ENCODE measurements at regions of chr6 and their contacts with region 1.

Region 1: DNA sequence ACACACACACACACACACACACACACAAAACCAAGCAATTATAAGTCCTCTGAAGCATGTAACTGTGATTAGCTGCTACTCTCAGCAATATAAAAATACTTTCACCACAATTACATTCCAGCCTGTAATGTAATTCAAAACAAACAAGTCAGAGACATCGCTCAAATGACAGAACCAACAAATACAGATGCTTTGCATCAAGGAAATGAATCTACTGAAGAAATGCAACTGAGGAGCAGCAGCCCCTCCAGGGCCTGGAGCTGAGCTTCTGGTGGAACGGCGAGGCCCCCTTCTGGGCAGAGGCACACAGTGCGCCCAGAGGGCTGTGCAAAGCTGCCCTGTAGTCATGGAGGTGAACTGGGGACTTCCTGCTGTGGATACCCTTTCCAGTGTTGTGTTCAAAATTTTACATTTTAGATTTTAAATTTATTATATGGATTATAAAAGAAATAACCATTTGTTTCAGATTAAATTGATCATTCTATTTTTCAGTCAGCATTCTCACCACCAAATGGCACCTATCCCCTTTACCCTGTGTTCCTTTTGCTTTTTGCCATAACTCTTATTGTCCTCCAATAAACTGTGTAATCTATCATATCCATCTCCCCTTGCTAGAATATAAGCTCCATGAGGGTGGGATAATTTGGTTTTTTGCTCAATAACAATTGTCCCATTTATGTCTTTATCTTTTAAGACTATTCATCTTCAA is 23.2 kb downstream of the ADAT2 start:
- DNase-seq: peak; percentile 60
- H3K4me3 ChIP-seq: no peak overlapping the region
- H3K27ac ChIP-seq: no peak overlapping the region
- H3K4me1 ChIP-seq: no peaks in the 10 kb centered on the region
- H3K27me3 ChIP-seq: no peaks in the 10 kb centered on the region
- CTCF ChIP-seq: peak; percentile 88

Region 2: DNA sequence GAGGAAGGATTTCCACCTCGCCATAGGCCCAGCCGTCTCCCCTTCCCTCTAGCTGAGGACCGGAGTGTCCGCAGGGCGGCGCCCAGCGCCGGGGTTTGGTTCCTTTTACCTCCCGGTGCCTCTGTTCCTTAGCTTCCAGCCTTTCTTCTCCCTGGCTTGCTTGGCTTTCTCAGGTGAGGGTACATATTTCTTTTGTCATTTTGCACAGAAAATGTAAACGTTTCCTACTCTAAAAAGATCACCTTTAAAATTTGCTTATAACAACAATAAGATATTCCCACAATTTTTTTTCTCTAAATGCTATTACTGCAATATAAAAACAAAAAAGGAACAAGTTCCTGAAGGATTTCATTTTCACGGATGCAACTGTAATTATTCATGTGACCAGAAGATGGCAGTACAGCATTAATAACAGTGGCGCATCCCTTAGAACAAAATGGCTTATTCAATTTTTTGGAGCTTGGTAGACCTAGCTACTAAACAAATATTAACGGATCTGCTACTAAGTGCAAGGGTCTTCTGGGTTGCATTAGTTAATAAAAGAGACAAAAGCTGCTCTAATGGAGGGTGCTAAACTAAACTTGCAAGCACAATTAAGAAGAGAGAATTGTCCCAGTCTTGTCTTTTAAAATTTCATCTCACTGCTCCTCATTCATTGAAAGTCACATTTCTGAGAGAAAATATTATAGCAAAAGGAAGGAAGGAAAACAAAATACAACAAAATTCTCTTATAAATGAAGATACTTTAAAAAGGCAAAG is 952.6 kb before region 1 on chr6:
- intact Hi-C with region 1: loop called (anchors 5 kb)
- DNase-seq: peak; percentile 19
- H3K4me3 ChIP-seq: no peak overlapping the region
- H3K27ac ChIP-seq: no peak overlapping the region
- H3K4me1 ChIP-seq: no peaks in the 10 kb centered on the region
- H3K27me3 ChIP-seq: no peaks in the 10 kb centered on the region
- CTCF ChIP-seq: peak; percentile 76

Region 3: DNA sequence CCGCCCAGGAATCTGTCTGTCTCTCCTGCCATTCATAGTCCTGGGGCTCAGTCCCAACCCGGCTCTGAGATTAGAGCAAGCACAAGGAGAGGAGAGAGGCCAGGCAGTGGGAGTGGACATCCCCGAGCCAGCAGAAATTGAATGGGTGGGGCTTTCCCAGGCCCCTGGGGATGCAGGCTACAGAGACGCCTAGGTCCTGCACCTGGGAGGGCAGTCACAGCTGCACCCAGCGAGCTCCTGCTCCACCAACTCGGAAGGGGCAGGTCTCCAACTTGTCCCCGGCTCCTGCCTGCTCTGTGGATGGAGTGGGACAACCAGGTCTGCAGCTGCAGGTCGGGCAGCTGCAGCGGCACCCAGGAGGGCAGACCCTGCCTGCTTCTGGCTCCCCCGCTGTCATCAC is 377.7 kb before region 1 on chr6:
- intact Hi-C with region 1: no loop called
- DNase-seq: no peak
- H3K4me3 ChIP-seq: no peak overlapping the region
- H3K27ac ChIP-seq: no peak overlapping the region
- H3K4me1 ChIP-seq: no peaks in the 10 kb centered on the region
- H3K27me3 ChIP-seq: no peaks in the 10 kb centered on the region
- CTCF ChIP-seq: no peak

Region 4: DNA sequence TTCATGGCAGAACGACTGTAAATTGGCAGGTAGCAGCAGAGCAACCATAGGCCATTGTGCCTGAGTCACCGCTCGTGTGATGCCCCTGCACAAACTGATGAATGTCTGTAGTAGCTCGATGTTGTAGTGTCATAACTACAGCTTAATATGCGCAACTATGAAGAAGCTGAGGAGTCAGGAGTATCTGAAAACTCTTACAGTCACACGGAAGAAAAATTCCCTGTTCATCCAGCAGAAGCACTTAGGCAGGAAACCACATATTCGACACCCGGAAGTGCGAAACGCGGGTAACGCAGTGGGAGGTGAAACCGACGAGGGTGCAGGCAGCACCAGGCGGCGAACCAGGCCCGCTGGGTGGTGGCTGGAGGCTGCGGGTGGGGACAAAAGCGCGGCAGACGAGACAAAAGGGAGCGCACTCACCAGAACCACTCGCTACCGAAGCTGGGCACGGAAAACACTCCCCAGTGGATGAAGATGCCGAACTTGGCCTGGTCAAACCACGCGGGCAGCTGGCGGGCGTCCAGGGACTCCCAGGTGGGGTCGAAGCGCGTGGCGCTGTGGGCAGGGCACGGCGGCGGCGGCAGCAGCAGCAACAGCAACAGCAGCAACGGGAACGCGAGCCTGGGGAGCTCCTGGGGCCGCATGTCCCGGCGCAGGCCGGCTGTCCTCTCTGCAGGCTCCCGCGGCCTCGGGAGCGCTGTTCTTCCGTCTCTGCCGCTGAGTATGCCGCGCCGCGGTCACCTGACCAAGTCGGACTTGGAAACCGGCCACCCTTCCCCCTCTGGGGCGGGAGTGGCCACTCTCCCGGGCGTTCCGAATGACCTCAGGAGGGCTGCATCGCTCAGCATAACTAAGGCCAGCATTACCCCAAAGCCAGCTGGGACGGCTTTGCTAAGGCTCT is 84.0 kb after region 1 on chr6 and contains the start of gene FUCA2:
- intact Hi-C with region 1: no loop called
- DNase-seq: peak; percentile 97
- H3K4me3 ChIP-seq: peak within 1 kb of the TSS; percentile 77
- H3K27ac ChIP-seq: peak within 1 kb of the TSS; percentile 89
- H3K4me1 ChIP-seq: peaks cover 3% of the 10 kb centered on the region
- H3K27me3 ChIP-seq: no peaks in the 10 kb centered on the region
- CTCF ChIP-seq: no peak
- total RNA-seq, gene FUCA2: 72.2 to 93.1 TPM

Measured in colonic mucosa (tissue), 4 donors.